A549 (cell line): ENCODE measurements at regions of chr7 and their contacts with region 1.

Region 1: GRCh38 chr7:7686811-7687508 is 31.4 kb downstream of the RPA3 start:
- DNase-seq: no peak
- ATAC-seq: no peak
- H3K4me3 ChIP-seq: no peak overlapping the region
- H3K27ac ChIP-seq: no peak overlapping the region
- H3K4me1 ChIP-seq: no peaks in the 10 kb centered on the region
- CTCF ChIP-seq: no peak
- EP300 ChIP-seq: no peak
- POLR2A ChIP-seq: no peak
- RAD21 ChIP-seq: no peak

Region 2: DNA sequence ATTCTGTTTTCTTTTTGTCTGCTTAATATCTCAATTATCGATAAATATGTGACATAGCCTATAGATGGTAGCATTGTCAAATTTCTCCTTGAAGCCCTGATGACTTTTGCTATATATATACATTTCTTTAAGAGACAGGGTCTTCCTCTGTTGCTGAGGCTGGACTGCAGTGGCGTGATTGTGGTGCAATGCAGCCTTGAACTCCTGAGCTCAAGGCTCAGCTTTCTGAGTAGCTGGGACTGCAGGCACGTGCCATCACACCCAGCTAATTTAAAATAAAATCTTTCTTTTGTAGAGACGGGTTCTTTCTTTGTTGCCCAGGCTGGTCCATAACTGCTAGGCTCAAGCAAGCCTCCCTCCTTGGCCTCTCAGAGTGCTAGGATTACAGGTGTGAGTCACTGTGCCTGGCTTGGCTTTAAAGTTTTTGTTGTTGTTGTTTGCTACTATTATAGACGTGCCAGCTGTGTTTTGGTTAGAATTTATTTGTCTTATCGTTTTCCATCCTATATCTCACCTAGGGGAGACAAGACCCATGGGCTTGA is 39.4 kb before region 1 on chr7:
- CTCF ChIA-PET with region 1: no interaction called
- POLR2A ChIA-PET with region 1: no interaction called
- DNase-seq: no peak
- ATAC-seq: no peak
- H3K4me3 ChIP-seq: no peak overlapping the region
- H3K27ac ChIP-seq: no peak overlapping the region
- H3K4me1 ChIP-seq: peaks cover under 1% of the 10 kb centered on the region; the same call in 2 of the 3 replicates
- CTCF ChIP-seq: no peak
- EP300 ChIP-seq: no peak
- POLR2A ChIP-seq: no peak
- RAD21 ChIP-seq: no peak

Region 3: GRCh38 chr7:7672545-7673239 is 14.3 kb before region 1 on chr7:
- CTCF ChIA-PET with region 1: no interaction called
- POLR2A ChIA-PET with region 1: no interaction called
- DNase-seq: no peak
- ATAC-seq: no peak
- H3K4me3 ChIP-seq: no peak overlapping the region
- H3K27ac ChIP-seq: no peak overlapping the region
- H3K4me1 ChIP-seq: no peaks in the 10 kb centered on the region
- CTCF ChIP-seq: no peak
- EP300 ChIP-seq: no peak
- POLR2A ChIP-seq: no peak
- RAD21 ChIP-seq: no peak

Region 4: GRCh38 chr7:7761340-7761980 is 74.5 kb after region 1 on chr7:
- CTCF ChIA-PET with region 1: interaction called, 68 read pairs
- POLR2A ChIA-PET with region 1: no interaction called
- DNase-seq: peak; percentile 12 to 60
- ATAC-seq: peak in 1 of 2 experiments; percentile 78; a peak in 3 of 6 replicates
- H3K4me3 ChIP-seq: peak overlapping the region; percentile 32
- H3K27ac ChIP-seq: peak overlapping the region; percentile 20 to 71; a peak in 3 of 6 replicates
- H3K4me1 ChIP-seq: peaks cover 40% of the 10 kb centered on the region
- CTCF ChIP-seq: peak; percentile 62
- EP300 ChIP-seq: no peak
- POLR2A ChIP-seq: no peak
- RAD21 ChIP-seq: peak; percentile 62 to 71